MCF 10A (cell line): ENCODE measurements at regions of chr20 and their contacts with region 1.

Region 1: DNA sequence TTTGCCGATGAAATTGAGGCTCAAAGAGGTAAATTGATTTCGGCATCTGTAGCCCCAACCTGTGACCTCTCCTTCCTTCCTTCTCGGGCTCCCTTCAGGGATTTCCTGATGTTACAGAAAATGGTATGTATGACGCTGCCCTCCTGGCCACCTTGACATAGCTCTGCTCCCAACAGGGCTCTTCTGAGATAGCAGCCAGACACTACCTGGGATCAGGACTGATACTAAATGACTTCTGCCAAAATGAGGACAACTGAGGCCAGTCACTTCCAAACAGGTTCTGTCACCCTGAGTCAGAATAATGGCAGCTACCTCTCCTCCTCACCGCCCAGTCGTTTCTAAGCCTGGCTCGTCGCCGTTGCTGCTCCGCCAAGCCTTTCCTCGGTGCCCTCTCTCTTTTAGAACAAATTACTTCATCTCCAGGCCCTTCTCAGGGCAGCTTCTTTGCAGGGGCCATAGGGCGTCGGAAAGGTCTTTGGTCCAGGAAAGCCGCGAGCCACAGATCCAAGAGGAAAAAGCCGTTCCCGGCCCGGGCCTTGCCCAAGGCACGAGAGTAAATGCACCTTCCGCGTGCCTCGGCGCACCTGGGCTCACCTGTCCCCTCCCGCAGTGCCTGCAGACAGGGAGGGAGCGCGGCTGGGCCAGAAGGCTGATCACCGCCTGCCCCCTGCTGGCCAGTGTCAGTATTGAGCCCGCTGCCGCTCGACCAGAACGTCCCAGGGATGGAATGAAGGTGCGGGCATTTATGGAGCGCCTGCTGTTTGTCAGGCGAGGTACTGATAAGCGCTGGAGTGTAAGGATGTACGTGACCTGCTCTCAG is 904 bp upstream of the LPIN3 start:
- DNase-seq: peak; percentile 89
- H3K4me3 Mint-ChIP-seq: peak overlapping the region; percentile 80
- H3K27ac Mint-ChIP-seq: peak overlapping the region; percentile 96
- H3K4me1 Mint-ChIP-seq: peaks cover 33% of the 10 kb centered on the region
- H3K27me3 Mint-ChIP-seq: no peaks in the 10 kb centered on the region
- CTCF ChIP-seq: peak; percentile 99

Region 2: DNA sequence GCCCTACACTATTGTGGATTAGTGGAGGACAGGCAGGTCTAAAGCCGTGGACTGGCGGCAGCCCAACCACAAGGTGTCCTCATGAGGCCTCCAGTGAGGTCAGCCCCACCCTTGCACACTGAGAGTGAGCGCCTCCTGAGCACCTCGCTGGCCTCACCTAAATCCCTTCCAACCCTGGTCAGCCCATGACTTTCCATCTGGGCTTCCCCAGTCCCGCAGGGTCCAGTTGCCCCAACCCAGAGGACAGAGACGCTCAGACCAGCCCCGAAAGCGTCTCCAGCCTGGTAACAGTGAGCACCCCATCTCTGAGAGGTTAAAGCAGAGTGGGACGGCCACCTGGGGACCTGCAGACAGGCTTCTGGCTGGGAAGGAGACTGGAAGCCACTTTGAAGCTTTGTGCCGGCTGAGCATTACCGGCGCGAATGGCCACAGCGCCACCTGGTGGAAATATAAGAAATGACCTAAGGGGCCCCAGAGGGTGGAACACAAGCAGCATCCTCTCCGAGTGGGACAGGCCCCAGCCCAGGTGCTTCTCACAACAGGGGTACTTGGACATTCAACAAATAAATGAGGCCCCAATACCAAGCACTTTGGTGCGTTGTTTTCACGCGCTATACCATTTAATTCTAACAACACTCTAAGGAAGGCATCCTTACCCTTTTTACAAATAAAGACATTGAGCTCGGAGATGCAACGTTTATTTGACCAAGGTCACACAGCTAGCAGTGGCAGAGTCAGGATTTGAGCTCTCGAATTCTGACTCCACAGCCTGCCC is 376.8 kb before region 1 on chr20:
- CTCF ChIA-PET with region 1: interaction called, 26 read pairs
- POLR2A ChIA-PET with region 1: interaction called, 9 read pairs
- intact Hi-C with region 1: loop called (anchors 1 kb)
- DNase-seq: peak; percentile 71
- H3K4me3 Mint-ChIP-seq: no peak overlapping the region
- H3K27ac Mint-ChIP-seq: no peak overlapping the region
- H3K4me1 Mint-ChIP-seq: peaks cover 20% of the 10 kb centered on the region
- H3K27me3 Mint-ChIP-seq: no peaks in the 10 kb centered on the region
- CTCF ChIP-seq: peak; percentile 84

Region 3: DNA sequence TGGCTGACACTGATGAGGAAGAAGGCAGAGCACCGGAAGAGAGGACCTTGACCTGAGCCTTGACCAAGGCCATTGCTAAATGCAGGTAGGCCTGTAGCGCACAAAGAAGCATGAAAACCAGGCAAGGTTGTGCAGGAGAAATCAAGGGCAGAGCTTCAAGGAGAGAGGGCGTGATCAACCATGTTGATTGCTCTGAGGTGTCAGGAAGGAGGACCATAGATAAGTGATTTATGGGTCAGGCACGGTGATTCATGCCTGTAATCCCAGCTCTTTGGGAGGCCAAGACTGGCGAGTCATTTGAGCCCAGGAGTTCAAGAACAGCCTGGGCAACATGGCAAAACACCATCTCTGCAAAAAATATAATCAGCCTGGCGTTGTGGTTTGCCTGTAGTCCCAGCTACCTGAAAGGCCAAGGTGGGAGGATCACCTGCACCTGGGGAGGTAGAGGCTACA is 190.0 kb before region 1 on chr20:
- CTCF ChIA-PET with region 1: interaction called, 30 read pairs
- POLR2A ChIA-PET with region 1: no interaction called
- intact Hi-C with region 1: no loop called
- DNase-seq: peak; percentile 56
- H3K4me3 Mint-ChIP-seq: no peak overlapping the region
- H3K27ac Mint-ChIP-seq: no peak overlapping the region
- H3K4me1 Mint-ChIP-seq: peaks cover 27% of the 10 kb centered on the region
- H3K27me3 Mint-ChIP-seq: no peaks in the 10 kb centered on the region
- CTCF ChIP-seq: no peak

Region 4: DNA sequence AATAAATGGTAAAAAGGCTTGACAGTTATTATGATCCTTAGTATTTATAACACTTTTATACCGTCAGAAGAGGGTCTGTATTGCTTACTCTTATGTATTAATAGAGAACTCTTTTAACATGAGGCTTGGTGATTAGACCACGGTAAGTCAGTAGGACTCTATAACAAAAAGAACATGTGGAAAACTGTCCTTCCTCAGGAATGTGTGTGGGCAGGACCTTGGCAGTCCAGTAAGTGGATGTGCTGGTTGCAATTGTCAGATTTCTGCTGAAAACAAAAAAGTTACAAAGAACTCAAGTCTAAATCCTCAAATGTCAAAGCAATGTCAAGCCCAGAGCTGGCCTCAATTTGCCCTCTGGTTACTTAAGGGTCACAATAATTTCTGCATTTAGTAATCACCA is 121.3 kb before region 1 on chr20:
- CTCF ChIA-PET with region 1: interaction called, 29 read pairs
- POLR2A ChIA-PET with region 1: interaction called, 5 read pairs
- intact Hi-C with region 1: no loop called
- DNase-seq: no peak
- H3K4me3 Mint-ChIP-seq: no peak overlapping the region
- H3K27ac Mint-ChIP-seq: no peak overlapping the region
- H3K4me1 Mint-ChIP-seq: peaks cover 13% of the 10 kb centered on the region
- H3K27me3 Mint-ChIP-seq: no peaks in the 10 kb centered on the region
- CTCF ChIP-seq: no peak

Region 5: GRCh38 chr20:41309817-41310216 is 29.9 kb before region 1 on chr20:
- CTCF ChIA-PET with region 1: interaction called, 18 read pairs
- POLR2A ChIA-PET with region 1: interaction called, 8 read pairs
- intact Hi-C with region 1: no loop called
- DNase-seq: peak; percentile 73
- H3K4me3 Mint-ChIP-seq: no peak overlapping the region
- H3K27ac Mint-ChIP-seq: peak overlapping the region; percentile 62
- H3K4me1 Mint-ChIP-seq: peaks cover 20% of the 10 kb centered on the region
- H3K27me3 Mint-ChIP-seq: no peaks in the 10 kb centered on the region
- CTCF ChIP-seq: no peak

Region 6: DNA sequence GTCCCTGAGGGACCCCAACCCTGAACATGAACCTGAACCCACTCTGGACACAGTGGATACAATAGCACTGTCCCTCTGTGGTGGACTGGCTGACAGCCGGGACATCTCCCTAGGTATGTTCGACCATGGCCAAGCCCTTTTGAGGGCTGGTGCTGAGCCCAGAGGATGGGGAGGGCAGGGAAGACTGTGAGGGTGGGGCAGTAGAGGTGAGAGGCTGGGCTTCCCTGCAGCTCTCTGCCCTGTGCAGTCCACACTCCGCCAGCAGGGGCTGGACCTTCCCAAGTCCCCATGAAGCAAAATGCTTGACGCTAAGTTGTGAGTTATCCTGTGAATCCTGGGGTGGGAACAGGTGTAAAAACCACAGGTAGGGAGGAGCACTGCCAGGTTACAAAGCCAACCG is 12.4 kb after region 1 on chr20:
- CTCF ChIA-PET with region 1: interaction called, 25 read pairs
- POLR2A ChIA-PET with region 1: interaction called, 5 read pairs
- intact Hi-C with region 1: no loop called
- DNase-seq: no peak
- H3K4me3 Mint-ChIP-seq: no peak overlapping the region
- H3K27ac Mint-ChIP-seq: no peak overlapping the region
- H3K4me1 Mint-ChIP-seq: no peaks in the 10 kb centered on the region
- H3K27me3 Mint-ChIP-seq: no peaks in the 10 kb centered on the region
- CTCF ChIP-seq: no peak